A673 (cell line): ENCODE measurements at regions of chr1 and their contacts with region 1.

Region 1: GRCh38 chr1:156677616-156678596 is 699 bp upstream of the NES start:
- DNase-seq: peak; percentile 86
- H3K4me3 ChIP-seq: peak overlapping the region; percentile 40
- H3K27ac ChIP-seq: no peak overlapping the region
- H3K4me1 ChIP-seq: peaks cover 13% of the 10 kb centered on the region
- H3K27me3 ChIP-seq: peaks cover 65% of the 10 kb centered on the region
- CTCF ChIP-seq: peak; percentile 96

Region 2: GRCh38 chr1:156583821-156584622 is 93.9 kb before region 1 on chr1:
- CTCF ChIA-PET with region 1: no interaction called
- POLR2A ChIA-PET with region 1: no interaction called
- intact Hi-C with region 1: loop called (anchors 5 kb)
- DNase-seq: peak; percentile 86
- H3K4me3 ChIP-seq: no peak overlapping the region
- H3K27ac ChIP-seq: no peak overlapping the region
- H3K4me1 ChIP-seq: no peaks in the 10 kb centered on the region
- H3K27me3 ChIP-seq: no peaks in the 10 kb centered on the region
- CTCF ChIP-seq: peak; percentile 85

Region 3: GRCh38 chr1:156625436-156626078 is 52.3 kb before region 1 on chr1:
- CTCF ChIA-PET with region 1: interaction called, 6 read pairs
- POLR2A ChIA-PET with region 1: no interaction called
- intact Hi-C with region 1: loop called (anchors 2 kb)
- DNase-seq: peak; percentile 64
- H3K4me3 ChIP-seq: peak overlapping the region; percentile 36
- H3K27ac ChIP-seq: no peak overlapping the region
- H3K4me1 ChIP-seq: peaks cover 16% of the 10 kb centered on the region
- H3K27me3 ChIP-seq: peaks cover 58% of the 10 kb centered on the region
- CTCF ChIP-seq: peak; percentile 90

Region 4: DNA sequence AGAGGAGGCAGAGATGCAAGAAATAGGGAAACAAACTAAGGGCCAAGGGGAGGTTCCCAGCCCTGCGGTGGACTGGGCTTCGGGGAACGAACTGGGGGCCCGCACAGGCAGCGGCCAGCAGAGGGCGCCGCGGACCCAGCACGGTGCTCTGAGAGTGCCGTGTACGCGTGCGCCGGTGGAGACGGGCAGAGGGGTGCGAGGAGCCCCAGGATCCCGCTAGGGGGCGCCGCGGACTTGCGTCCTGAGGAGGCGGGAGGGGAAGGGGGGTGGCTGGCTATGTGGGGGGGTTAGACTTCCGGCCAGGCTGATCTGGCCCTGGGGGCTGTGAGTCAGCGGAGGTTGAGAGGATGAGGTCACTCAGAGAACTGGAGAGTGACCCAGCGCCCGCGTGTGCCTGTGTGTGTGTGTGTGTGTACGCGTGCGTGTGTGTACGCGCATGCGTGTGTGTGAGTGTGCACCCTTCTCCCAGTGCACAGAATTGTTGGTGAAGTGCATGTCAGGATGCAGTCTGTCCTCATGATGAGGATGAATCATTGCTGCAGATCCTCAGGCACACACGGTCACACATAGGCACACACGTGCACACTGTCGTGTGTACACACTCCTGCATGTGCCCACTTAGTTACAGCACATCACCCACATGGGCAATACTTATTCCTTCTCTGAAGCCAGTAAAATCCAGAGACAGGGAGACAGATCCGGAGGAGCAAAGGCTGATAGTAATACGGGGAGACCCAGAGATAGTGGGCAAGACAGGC is 17.7 kb before region 1 on chr1:
- CTCF ChIA-PET with region 1: interaction called, 6 read pairs
- POLR2A ChIA-PET with region 1: interaction called, 7 read pairs
- intact Hi-C with region 1: loop called (anchors 2 kb)
- DNase-seq: peak; percentile 96
- H3K4me3 ChIP-seq: no peak overlapping the region
- H3K27ac ChIP-seq: no peak overlapping the region
- H3K4me1 ChIP-seq: peaks cover 53% of the 10 kb centered on the region
- H3K27me3 ChIP-seq: peaks cover 22% of the 10 kb centered on the region
- CTCF ChIP-seq: peak; percentile 100